ENCODE measurements at regions of chrX and their contacts with region 1.

Region 1: DNA sequence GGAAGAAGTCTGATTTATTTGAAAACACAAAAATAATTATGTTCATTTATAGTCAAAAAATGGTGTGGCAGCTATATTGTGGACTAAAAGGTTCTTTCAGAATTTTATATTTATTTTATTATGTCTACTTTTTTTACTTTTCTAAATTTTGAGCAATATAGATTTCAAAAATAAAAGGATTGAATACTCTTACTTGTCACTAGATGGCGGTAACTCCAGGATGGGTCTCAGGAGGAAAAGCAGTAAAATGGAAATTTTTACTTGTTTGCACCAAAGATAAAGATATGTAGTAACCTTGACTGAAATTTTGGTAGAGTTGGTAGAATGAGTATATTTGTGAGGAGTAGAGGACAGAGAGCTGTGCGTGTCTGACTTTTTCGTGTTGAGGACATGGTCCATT is 14.5 kb upstream of the DACH2 start:
- DNase-seq: no peak
- H3K4me3 ChIP-seq: no peak overlapping the region
- H3K27ac ChIP-seq: no peak overlapping the region
- H3K27me3 ChIP-seq: no peaks in the 10 kb centered on the region
- CTCF ChIP-seq: peak; percentile 61

Region 2: GRCh38 chrX:85905851-85906250 is 227.9 kb before region 1 on chrX:
- CTCF ChIA-PET with region 1: no interaction called
- POLR2A ChIA-PET with region 1: no interaction called
- DNase-seq: no peak
- H3K4me3 ChIP-seq: no peak overlapping the region
- H3K27ac ChIP-seq: no peak overlapping the region
- H3K27me3 ChIP-seq: no peaks in the 10 kb centered on the region
- CTCF ChIP-seq: no peak

Region 3: GRCh38 chrX:86171366-86171765 is 37.6 kb after region 1 on chrX:
- CTCF ChIA-PET with region 1: interaction called, 30 read pairs
- POLR2A ChIA-PET with region 1: no interaction called
- DNase-seq: no peak
- H3K4me3 ChIP-seq: no peak overlapping the region
- H3K27ac ChIP-seq: no peak overlapping the region
- H3K27me3 ChIP-seq: no peaks in the 10 kb centered on the region
- CTCF ChIP-seq: peak; percentile 56

Region 4: GRCh38 chrX:86696951-86697350 is 563.2 kb after region 1 on chrX:
- CTCF ChIA-PET with region 1: interaction called, 10 read pairs
- POLR2A ChIA-PET with region 1: no interaction called
- DNase-seq: no peak
- H3K4me3 ChIP-seq: no peak overlapping the region
- H3K27ac ChIP-seq: no peak overlapping the region
- H3K27me3 ChIP-seq: no peaks in the 10 kb centered on the region
- CTCF ChIP-seq: no peak

Measured in AG04450 (cell line).